G401 (cell line): ENCODE measurements at regions of chr15 and their contacts with region 1.

Region 1: DNA sequence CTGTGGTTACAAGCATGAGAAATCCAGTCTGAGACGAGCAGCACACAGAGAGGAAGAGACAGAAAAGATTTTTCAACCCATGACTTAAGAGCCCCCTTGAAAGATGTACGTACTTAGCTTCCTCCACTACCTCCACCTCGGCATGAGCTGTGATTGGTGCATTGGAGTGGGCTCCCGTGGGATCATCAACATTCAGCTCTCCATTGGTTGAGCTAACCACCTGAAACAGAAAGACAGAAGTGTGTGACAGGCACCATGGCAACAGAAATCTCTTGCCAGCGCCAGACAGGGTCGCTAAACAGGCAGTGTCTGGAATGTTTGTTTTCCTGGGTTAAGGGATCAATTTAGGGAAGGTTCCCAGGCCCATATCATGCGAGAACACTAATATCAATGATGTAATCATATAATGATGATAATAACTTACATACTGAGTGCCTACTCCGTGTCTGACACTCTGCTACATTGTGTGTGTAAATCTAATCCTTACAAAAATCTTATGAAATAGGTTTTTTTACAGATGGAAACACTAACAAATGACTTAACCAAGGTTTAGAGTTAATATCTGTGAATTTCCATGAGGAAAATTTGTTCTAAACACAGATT is 17.5 kb upstream of the PPIB start:
- DNase-seq: no peak

Region 2: GRCh38 chr15:64067564-64068030 is 112.7 kb before region 1 on chr15:
- in situ Hi-C with region 1: no loop called
- DNase-seq: peak; percentile 75

Region 3: GRCh38 chr15:64122936-64123351 is 57.4 kb before region 1 on chr15:
- in situ Hi-C with region 1: no loop called
- DNase-seq: no peak

Region 4: GRCh38 chr15:64216730-64217428 is 36.5 kb after region 1 on chr15:
- in situ Hi-C with region 1: no loop called
- DNase-seq: no peak

Region 5: GRCh38 chr15:64351265-64351664 is 170.9 kb after region 1 on chr15:
- in situ Hi-C with region 1: loop called (anchors 5 kb)
- DNase-seq: no peak